HepG2 (cell line): ENCODE measurements at regions of chr1 and their contacts with region 1.

Region 1: DNA sequence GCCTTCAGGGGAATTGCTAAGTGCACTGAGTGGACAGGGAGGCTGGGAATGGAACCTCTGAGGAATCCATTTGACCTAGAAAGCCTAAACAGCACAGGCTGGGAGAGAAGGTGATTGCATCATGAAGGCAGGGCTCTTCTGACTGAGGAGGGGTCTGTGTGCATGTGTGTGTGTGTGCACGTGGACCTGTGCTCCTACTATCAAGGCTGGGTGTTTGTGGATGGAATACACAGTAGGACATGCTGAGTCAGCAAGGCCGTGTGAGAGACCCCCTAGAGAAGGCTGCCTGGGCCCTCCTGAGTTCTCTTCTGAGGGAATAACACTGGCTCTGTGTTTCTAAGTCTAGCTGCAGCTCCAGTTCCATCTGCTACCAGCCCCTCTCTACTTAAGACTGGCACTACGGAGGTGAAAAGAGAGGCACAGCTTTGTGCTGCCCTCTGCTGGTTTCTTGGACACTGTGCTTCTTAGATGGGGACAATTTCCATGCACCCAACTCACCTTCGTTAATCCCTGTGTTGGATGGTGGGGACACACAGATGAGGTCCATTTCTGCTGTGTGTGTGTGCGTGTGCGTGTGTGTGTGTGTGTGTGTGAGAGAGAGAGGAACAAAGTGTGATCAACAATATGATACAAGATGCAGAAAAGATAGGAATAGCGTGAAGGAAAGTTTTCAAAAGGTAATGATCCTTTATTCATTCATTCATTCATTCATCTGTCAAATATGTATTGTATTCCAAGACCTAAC is 6.2 kb upstream of the EFCAB14 start:
- DNase-seq: peak; percentile 71
- ATAC-seq: peak; percentile 97
- H3K4me3 ChIP-seq: peak overlapping the region in 1 of 3 experiments; percentile 41; a peak in 1 of 6 replicates
- H3K27ac ChIP-seq: no peak overlapping the region
- H3K4me1 ChIP-seq: peaks cover 31% of the 10 kb centered on the region
- H3K27me3 ChIP-seq: no peaks in the 10 kb centered on the region
- CTCF ChIP-seq: peak; percentile 94
- EP300 ChIP-seq: no peak
- POLR2A ChIP-seq: no peak
- RAD21 ChIP-seq: peak; percentile 65

Region 2: GRCh38 chr1:46549697-46550681 is 175.2 kb before region 1 on chr1:
- CTCF ChIA-PET with region 1: no interaction called
- POLR2A ChIA-PET with region 1: no interaction called
- in situ Hi-C with region 1: no loop called
- intact Hi-C with region 1: loop called (anchors 10 kb)
- DNase-seq: peak; percentile 24
- ATAC-seq: peak; percentile 48
- H3K4me3 ChIP-seq: no peak overlapping the region
- H3K27ac ChIP-seq: no peak overlapping the region
- H3K4me1 ChIP-seq: peaks cover 11% of the 10 kb centered on the region; the same call in 1 of the 2 replicates
- H3K27me3 ChIP-seq: peaks cover 6 to 46% of the 10 kb centered on the region in 2 experiments; a peak in 3 of 5 replicates
- CTCF ChIP-seq: no peak
- EP300 ChIP-seq: no peak
- POLR2A ChIP-seq: no peak
- RAD21 ChIP-seq: no peak

Region 3: DNA sequence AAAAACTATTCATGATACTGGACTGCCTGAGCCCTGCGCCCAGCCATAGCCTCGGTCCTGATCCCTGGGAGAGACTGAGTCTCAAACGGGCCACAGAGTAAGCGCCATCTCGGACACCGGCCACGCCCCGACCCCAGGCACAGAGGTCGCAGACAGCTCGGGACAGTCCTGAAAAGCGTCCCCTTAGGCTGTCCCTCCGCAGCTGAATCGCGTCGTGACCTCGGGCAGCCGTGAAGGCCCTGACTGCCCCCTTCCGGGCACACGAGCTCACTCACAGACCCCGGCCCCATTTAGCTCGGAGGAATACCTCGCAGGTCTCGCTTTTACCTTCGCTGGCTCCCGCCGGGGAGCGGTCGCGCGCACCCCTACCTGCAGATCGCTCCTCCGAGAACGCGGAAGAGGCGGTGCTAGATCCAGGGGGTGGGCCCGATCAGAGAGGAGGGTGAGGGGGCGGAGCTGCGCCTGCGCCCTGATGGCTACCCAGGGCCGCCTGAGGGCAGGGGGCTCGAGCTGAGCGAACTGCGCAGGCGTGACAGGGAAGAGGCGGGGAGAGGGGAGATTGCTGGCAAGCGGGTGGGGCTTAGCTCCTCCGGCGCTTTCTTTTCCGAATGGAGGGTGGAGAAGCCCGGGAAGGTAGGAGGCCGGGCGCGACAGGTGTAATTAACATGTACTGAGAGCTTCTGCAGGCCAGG is 121.2 kb before region 1 on chr1 and contains the start of gene MKNK1:
- CTCF ChIA-PET with region 1: no interaction called
- POLR2A ChIA-PET with region 1: interaction called, 5 read pairs
- in situ Hi-C with region 1: no loop called
- intact Hi-C with region 1: loop called (anchors 5 kb)
- DNase-seq: peak; percentile 92
- ATAC-seq: peak; percentile 92
- H3K4me3 ChIP-seq: peak within 1 kb of the TSS; percentile 91 to 97 (median 92)
- H3K27ac ChIP-seq: peak within 1 kb of the TSS; percentile 56
- H3K4me1 ChIP-seq: peaks cover 44% of the 10 kb centered on the region
- H3K27me3 ChIP-seq: no peaks in the 10 kb centered on the region
- CTCF ChIP-seq: peak; percentile 56
- EP300 ChIP-seq: no peak
- POLR2A ChIP-seq: peak; percentile 69 to 96
- RAD21 ChIP-seq: peak; percentile 56
- total RNA-seq, gene MKNK1: 14.7 and 18.5 TPM in 2 replicates

Region 4: DNA sequence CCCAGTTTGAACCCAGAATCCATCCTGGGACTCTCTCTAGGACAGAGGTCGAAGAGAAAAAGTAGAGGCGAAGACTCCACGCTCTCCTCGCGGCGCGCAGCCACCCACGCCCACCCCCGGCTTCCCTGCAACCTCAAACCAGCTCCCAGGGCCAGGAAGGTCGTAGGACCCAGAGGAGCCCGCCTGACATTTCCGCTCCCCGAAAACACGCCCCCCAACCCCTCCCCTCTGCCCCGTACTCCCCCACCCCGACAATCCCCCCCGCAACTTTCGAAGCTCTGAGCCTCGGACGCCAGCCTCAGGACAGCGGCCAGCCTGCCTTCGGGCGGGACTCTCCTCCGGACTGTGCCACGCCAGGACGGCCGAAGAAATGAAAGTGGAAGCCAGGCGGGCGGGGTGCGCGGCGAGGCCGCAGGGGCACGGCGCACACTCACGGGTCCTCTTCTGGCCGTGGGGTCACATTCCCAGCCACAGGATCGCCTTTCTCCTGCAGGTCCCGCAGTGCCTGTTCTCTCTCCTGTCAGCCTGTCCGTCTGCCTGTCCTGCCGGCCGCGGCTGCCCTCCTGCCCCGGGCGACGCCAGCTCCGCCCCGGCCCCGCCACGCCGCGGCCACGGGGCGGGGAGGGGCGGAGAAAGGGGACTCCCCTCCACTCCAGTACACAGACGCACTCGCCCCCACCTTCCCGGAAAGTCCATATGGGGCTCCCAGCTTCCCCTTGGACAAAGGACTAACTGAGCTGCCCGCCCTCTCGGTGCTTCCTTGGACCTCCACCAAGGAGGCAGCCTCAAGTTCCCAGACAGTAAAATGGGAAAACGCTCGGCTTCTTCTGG is 108.7 kb before region 1 on chr1 and contains the start of gene MOB3C:
- CTCF ChIA-PET with region 1: no interaction called
- POLR2A ChIA-PET with region 1: interaction called, 4 read pairs
- in situ Hi-C with region 1: loop called (anchors 5 kb)
- intact Hi-C with region 1: no loop called
- DNase-seq: no peak
- ATAC-seq: peak; percentile 76
- H3K4me3 ChIP-seq: peak within 1 kb of the TSS; percentile 59 to 83 (median 78)
- H3K27ac ChIP-seq: peak within 1 kb of the TSS; percentile 51
- H3K4me1 ChIP-seq: peaks cover 38% of the 10 kb centered on the region
- H3K27me3 ChIP-seq: no peaks in the 10 kb centered on the region; a peak in 1 of 5 replicates
- CTCF ChIP-seq: no peak
- EP300 ChIP-seq: no peak
- POLR2A ChIP-seq: peak; percentile 41 to 60; a peak in 2 of 4 replicates
- RAD21 ChIP-seq: no peak
- total RNA-seq, gene MOB3C: 3.1 and 3.5 TPM in 2 replicates

Region 5: DNA sequence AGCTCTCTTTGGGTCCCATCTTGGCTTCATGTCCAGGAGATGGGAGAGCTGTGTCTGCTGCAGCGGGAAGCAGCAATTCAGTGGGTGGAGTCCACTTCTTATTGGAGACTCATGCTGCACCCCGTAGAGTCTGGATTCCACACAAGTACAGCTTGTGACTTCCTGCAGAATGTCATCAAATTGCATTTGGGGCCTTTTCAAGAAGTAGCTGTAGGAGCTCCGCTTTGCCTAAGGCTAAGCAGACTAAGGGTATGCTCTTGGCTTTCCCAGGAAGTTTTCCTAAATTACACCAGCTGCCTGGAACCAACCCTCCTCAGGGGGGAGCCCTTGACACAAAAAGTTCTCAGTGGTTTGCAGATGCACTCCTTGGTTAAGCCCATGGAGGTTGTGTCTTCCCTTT is 102.8 kb before region 1 on chr1:
- CTCF ChIA-PET with region 1: interaction called, 9 read pairs
- POLR2A ChIA-PET with region 1: interaction called, 4 read pairs
- in situ Hi-C with region 1: loop called (anchors 5 kb)
- intact Hi-C with region 1: loop called (anchors 1 kb)
- DNase-seq: peak; percentile 31
- ATAC-seq: peak; percentile 56
- H3K4me3 ChIP-seq: no peak overlapping the region
- H3K27ac ChIP-seq: no peak overlapping the region
- H3K4me1 ChIP-seq: peaks cover 38% of the 10 kb centered on the region
- H3K27me3 ChIP-seq: no peaks in the 10 kb centered on the region; a peak in 1 of 5 replicates
- CTCF ChIP-seq: peak; percentile 59
- EP300 ChIP-seq: no peak
- POLR2A ChIP-seq: no peak
- RAD21 ChIP-seq: no peak